Posterior vena cava (tissue), 2 donors: ENCODE measurements at regions of chr6 and their contacts with region 1.

Region 1: DNA sequence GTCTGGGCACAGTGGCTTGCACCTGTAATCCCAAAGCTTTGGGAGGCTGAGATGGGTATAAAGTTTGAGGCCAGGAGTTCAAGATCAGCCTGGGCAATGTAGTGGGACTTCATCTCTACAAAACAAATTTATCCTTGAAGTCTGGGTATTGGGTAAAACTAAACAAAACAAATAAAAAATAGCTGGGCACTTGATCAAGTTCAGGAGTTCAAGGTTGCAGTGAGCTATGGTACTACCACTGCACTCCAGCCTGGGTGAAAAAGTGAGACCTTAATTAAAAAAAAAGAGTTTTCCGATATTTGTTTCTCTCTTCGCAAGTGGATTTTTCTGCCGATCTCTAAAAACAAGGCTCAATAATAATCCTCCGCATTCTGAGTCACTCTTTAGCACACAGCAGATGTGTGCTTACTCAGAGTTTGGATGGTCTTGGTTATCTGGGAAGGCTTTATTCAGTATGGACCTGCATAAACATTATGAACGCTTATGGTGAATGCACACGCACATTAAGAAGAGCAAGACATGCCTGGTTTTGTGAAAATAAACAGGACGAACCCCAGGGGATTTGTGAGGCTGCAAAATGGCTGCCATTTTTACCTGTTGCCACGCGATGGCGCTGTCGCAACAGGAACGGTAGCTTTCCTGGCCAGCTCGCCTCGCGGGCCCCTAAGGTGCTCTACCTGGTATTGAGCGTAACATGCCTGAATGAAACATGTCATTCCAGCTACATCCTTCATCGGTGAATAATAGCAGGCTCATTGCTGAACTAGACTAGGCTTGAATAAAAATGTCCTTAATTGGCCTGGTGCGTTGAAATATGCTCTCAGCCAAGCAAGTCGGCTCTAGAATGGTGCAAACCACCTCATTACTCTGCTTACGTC is 6.0 kb downstream of the OPN5 start:
- DNase-seq: peak; percentile 83

Region 2: DNA sequence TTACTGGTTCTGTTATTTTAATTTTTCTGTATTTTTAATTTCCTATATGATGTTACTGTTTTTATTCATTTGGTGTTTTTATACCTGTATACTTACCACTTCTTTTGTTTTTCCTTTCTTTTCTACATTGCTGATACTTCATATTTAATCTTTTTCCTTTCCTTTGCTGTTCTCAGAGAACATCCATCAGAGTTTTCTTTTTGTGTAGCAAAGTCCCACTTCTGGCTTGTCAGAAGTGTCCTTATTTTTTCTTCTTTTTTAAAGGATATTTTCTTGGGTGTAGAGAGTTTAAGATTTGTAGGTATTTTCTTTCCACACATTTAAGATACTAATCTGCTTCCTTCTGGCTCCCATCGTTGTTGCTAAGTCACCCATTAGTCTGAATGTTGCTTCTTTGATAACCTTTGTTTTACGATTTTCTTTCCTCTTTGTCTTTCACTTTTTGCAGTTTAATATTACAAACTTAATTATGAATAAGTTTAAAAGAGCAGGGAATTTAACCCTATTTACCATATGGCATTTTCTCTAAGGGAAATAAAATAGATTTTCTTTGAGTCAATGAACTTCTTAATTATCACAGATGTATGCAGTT is 291.8 kb before region 1 on chr6:
- intact Hi-C with region 1: no loop called
- DNase-seq: no peak

Region 3: DNA sequence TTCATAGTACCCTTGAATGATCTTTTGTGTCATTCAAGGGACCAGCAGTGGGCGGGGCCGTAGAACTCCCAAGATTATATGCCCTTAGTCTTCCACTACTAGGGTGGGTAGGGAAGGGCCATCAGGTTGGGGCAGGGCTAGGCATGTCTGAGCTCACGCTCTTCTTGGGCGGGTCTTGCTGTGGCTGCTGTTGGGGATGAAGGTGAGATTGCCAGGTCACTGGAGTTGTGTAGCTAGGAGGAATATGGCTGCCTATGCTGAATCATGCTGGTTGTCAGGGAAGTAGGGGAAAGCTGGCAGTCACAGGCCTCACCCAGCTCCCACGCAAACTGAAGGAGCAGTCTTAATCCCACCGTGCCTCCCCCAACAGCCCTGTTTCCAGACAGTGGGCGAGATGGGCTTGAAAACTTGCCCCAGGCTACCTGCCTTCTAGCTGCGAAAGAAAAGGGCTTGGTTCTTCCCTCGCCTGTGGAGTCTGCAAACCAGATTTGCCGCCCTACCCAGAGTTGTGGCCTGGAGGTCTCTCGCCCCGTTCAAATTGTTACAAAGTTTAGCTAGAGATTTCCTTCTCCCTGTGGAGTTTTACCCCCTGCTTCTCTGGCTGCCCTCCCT is 165.9 kb before region 1 on chr6:
- intact Hi-C with region 1: loop called in 1 of 2 experiments (anchors 10 kb)
- DNase-seq: peak; percentile 36

Region 4: GRCh38 chr6:47631269-47631772 is 156.5 kb before region 1 on chr6:
- intact Hi-C with region 1: loop called (anchors 5 to 10 kb)
- DNase-seq: no peak